ENCODE measurements at regions of chr12 and their contacts with region 1.

Region 1: DNA sequence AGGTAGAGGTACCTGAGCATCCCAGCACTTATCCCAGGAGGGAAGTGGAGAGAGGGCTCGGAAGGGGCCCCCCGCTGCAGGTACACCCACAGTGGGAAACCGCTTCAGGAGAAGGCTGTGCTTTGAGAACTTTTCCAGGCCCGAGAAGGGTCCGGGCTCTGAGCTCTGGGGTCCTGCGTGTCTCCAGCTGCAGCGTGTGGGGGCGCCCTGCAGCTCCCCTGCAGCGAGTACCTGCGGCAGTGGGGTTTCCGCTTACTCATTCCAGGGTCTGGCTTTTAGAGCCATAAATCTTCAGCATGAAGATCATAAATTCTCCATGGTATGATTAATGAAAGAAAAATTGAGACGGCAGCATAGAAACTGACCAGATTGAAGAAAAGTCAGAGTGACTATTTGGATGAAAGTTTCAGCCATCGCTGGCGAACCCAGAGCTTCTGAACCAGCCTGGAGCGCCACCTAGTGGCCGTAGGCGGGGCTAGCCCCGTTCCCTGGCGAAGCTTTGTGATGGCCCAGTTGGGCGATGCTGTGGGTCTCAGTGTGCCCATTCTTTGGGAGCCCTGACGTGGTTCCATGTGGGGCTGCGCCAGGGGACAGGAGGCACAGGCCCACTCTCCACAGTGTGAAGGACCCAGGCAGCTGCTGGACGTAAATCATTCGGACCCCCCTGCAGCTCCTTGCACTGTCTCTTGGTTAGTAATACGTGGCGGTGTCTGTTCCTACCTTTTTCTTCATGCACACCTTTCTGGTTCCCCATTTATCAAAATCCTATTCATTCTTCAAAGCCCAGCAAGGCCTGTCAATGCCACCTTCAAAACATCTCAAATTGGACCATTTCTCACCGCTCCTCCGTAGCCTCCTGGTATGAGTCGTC is 198.2 kb downstream of the TSPAN9 start:
- DNase-seq: peak; percentile 51 to 90 (median 77)
- H3K4me3 ChIP-seq: no peak overlapping the region
- H3K27ac ChIP-seq: no peak overlapping the region
- H3K4me1 ChIP-seq: no peaks in the 10 kb centered on the region
- H3K27me3 ChIP-seq: no peaks in the 10 kb centered on the region
- CTCF ChIP-seq: peak; percentile 88 to 98 (median 94)
- POLR2A ChIP-seq: no peak

Region 2: DNA sequence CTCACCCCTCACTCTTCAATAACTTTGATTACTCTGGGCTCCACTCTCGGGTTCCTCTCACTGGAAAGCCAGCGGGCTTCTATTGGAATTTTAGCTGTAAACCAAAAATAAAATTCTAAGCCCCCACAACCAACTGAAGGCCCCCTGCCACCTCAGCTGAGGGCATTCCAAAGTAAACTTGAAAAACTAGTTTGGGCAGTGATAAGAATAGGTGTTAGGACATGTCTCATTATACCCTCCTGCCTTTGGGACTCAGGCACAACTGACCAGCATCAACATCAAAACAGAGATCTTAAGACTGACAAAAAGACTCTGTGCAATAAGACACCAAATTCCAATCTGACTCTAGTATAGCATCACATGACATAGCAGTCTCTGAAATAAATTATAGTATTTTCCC is 210.1 kb before region 1 on chr12:
- intact Hi-C with region 1: loop called (anchors 5 kb)
- DNase-seq: no peak
- H3K4me3 ChIP-seq: no peak overlapping the region
- H3K27ac ChIP-seq: no peak overlapping the region
- H3K4me1 ChIP-seq: no peaks in the 10 kb centered on the region
- H3K27me3 ChIP-seq: no peaks in the 10 kb centered on the region
- CTCF ChIP-seq: no peak
- POLR2A ChIP-seq: no peak

Region 3: GRCh38 chr12:3073438-3074250 is 201.8 kb before region 1 on chr12:
- intact Hi-C with region 1: loop called (anchors 5 kb)
- DNase-seq: peak; percentile 79 to 95 (median 85)
- H3K4me3 ChIP-seq: no peak overlapping the region
- H3K27ac ChIP-seq: peak overlapping the region in 1 of 5 donors; percentile 17
- H3K4me1 ChIP-seq: peaks cover 5 to 16% of the 10 kb centered on the region in 2 donors
- H3K27me3 ChIP-seq: no peaks in the 10 kb centered on the region
- CTCF ChIP-seq: peak; percentile 93 to 99 (median 96)
- POLR2A ChIP-seq: no peak

Region 4: GRCh38 chr12:3135522-3136461 is 139.6 kb before region 1 on chr12:
- intact Hi-C with region 1: loop called (anchors 1 to 2 kb)
- DNase-seq: peak; percentile 28 to 76 (median 47)
- H3K4me3 ChIP-seq: no peak overlapping the region
- H3K27ac ChIP-seq: no peak overlapping the region
- H3K4me1 ChIP-seq: peaks cover 0 to under 1% of the 10 kb centered on the region in 2 donors
- H3K27me3 ChIP-seq: no peaks in the 10 kb centered on the region
- CTCF ChIP-seq: peak; percentile 68 to 89 (median 81)
- POLR2A ChIP-seq: no peak

Region 5: DNA sequence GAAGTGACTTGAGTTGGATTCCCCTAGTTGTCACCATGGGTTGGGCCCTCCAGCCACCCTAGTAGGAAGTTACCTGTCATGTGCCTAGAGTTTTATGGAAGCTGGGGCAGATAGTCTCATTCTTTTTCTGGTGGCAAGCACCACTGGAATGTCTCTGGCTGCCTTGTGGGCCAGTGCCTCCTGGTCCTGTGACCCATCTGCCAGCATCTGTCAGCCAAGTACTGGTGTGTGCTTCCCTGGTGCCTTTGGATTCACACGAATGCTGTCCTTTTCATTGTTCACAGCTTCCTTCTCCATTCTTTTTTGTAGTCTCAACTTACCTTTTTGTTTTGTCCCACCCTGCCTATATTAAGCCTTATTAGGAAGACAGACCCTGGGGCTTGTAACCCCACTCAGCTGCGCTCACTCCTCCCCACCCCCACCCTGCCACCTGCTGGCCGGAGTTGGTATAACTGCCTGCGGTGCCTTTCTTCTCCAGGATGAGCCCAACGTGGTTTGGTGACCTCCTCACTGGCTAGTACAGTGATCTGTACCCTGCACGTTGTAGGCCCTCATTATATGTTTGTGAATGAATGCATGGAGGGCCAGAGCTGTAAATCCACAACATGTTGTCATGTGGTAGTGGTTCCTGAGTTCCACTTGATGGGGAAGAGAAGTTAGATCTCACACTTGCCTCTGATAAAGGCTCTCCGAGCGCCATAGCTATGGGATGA is 72.5 kb before region 1 on chr12:
- intact Hi-C with region 1: loop called in 1 of 2 experiments (anchors 5 kb)
- DNase-seq: peak; percentile 40 to 75 (median 61)
- H3K4me3 ChIP-seq: no peak overlapping the region
- H3K27ac ChIP-seq: no peak overlapping the region
- H3K4me1 ChIP-seq: peaks cover 16 to 24% of the 10 kb centered on the region in 2 donors
- H3K27me3 ChIP-seq: no peaks in the 10 kb centered on the region
- CTCF ChIP-seq: peak; percentile 75 to 94 (median 90)
- POLR2A ChIP-seq: no peak

Region 6: DNA sequence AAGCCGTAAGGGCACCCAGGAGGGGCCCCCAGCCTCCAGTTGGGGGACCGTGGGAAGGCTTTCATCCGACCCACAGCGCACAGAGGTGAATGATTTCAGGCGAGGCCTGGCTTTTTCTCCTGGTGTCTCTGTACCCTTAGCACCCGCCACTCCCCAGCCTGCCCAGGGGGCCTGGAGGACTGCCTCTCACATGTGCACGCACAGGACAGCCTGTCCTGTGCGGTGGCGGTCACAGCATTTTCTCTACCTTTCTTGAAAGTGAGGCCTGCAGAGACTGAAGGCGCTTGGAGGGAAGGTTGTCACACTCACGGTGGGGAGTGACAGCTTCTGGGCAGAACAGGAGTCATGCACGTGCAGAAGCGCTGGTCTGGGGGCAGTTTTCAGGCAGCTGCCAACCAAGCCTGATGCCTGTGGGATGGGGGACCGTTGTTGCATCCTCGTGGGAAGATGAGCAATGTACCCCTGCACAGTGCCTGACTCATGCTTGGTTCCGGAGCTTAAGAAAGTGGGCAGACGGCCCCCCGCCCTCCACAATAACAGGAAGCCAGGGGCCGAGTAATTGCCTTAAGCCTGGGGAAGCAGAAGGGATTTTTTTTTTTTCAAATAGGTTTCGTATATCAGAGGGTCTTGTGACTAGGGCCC is 50.1 kb before region 1 on chr12:
- intact Hi-C with region 1: no loop called
- DNase-seq: no peak
- H3K4me3 ChIP-seq: no peak overlapping the region
- H3K27ac ChIP-seq: no peak overlapping the region
- H3K4me1 ChIP-seq: no peaks in the 10 kb centered on the region
- H3K27me3 ChIP-seq: no peaks in the 10 kb centered on the region
- CTCF ChIP-seq: no peak
- POLR2A ChIP-seq: no peak

Measured in adrenal gland (tissue), 19 donors.